CD4-positive, alpha-beta T cell (primary cell): ENCODE measurements at regions of chr6 and their contacts with region 1.

Region 1: GRCh38 chr6:142946181-142946923 is 1.4 kb upstream of the HIVEP2 start:
- DNase-seq: peak; percentile 75 to 99 (median 90)
- ATAC-seq: peak; percentile 46
- H3K4me3 ChIP-seq: peak overlapping the region; percentile 94
- H3K4me3 Mint-ChIP-seq: peak overlapping the region; percentile 96
- H3K27ac ChIP-seq: peak overlapping the region; percentile 98 to 100
- H3K27ac Mint-ChIP-seq: peak overlapping the region; percentile 98
- H3K4me1 ChIP-seq: peaks cover 14% of the 10 kb centered on the region
- H3K4me1 Mint-ChIP-seq: peaks cover 42% of the 10 kb centered on the region
- H3K27me3 ChIP-seq: no peaks in the 10 kb centered on the region
- H3K27me3 Mint-ChIP-seq: peaks cover 5% of the 10 kb centered on the region
- CTCF ChIP-seq: no peak

Region 2: GRCh38 chr6:142395768-142396231 is 550.6 kb before region 1 on chr6:
- CTCF ChIA-PET with region 1: no interaction called
- POLR2A ChIA-PET with region 1: no interaction called
- intact Hi-C with region 1: loop called in 1 of 2 experiments (anchors 5 kb)
- DNase-seq: peak in 3 of 14 experiments; percentile 78 to 87 (median 85)
- ATAC-seq: peak; percentile 92
- H3K4me3 ChIP-seq: peak overlapping the region; percentile 7
- H3K4me3 Mint-ChIP-seq: peak overlapping the region; percentile 42
- H3K27ac ChIP-seq: peak overlapping the region in 1 of 2 donors; percentile 79
- H3K27ac Mint-ChIP-seq: peak overlapping the region; percentile 92
- H3K4me1 ChIP-seq: peaks cover 3% of the 10 kb centered on the region
- H3K4me1 Mint-ChIP-seq: peaks cover 50% of the 10 kb centered on the region
- H3K27me3 ChIP-seq: no peaks in the 10 kb centered on the region
- H3K27me3 Mint-ChIP-seq: no peaks in the 10 kb centered on the region
- CTCF ChIP-seq: no peak

Region 3: GRCh38 chr6:142692942-142693341 is 253.4 kb before region 1 on chr6:
- CTCF ChIA-PET with region 1: interaction called, 3 read pairs
- POLR2A ChIA-PET with region 1: interaction called, 3 read pairs
- intact Hi-C with region 1: loop called in 1 of 2 experiments (anchors 2 kb)
- DNase-seq: peak; percentile 43 to 82 (median 62)
- ATAC-seq: peak; percentile 89
- H3K4me3 ChIP-seq: no peak overlapping the region
- H3K4me3 Mint-ChIP-seq: no peak overlapping the region
- H3K27ac ChIP-seq: no peak overlapping the region
- H3K27ac Mint-ChIP-seq: no peak overlapping the region
- H3K4me1 ChIP-seq: peaks cover 8% of the 10 kb centered on the region
- H3K4me1 Mint-ChIP-seq: peaks cover 21% of the 10 kb centered on the region
- H3K27me3 ChIP-seq: no peaks in the 10 kb centered on the region
- H3K27me3 Mint-ChIP-seq: no peaks in the 10 kb centered on the region
- CTCF ChIP-seq: peak; percentile 96

Region 4: GRCh38 chr6:142819603-142820337 is 126.6 kb before region 1 on chr6:
- CTCF ChIA-PET with region 1: interaction called, 3 read pairs
- POLR2A ChIA-PET with region 1: interaction called, 16 read pairs
- intact Hi-C with region 1: no loop called
- DNase-seq: peak in 5 of 14 experiments; percentile 13 to 84 (median 75)
- ATAC-seq: peak; percentile 51
- H3K4me3 ChIP-seq: peak overlapping the region; percentile 45
- H3K4me3 Mint-ChIP-seq: peak overlapping the region; percentile 84
- H3K27ac ChIP-seq: peak overlapping the region; percentile 75 to 84
- H3K27ac Mint-ChIP-seq: peak overlapping the region; percentile 82
- H3K4me1 ChIP-seq: peaks cover 52% of the 10 kb centered on the region
- H3K4me1 Mint-ChIP-seq: peaks cover 82% of the 10 kb centered on the region
- H3K27me3 ChIP-seq: no peaks in the 10 kb centered on the region
- H3K27me3 Mint-ChIP-seq: no peaks in the 10 kb centered on the region
- CTCF ChIP-seq: no peak

Region 5: DNA sequence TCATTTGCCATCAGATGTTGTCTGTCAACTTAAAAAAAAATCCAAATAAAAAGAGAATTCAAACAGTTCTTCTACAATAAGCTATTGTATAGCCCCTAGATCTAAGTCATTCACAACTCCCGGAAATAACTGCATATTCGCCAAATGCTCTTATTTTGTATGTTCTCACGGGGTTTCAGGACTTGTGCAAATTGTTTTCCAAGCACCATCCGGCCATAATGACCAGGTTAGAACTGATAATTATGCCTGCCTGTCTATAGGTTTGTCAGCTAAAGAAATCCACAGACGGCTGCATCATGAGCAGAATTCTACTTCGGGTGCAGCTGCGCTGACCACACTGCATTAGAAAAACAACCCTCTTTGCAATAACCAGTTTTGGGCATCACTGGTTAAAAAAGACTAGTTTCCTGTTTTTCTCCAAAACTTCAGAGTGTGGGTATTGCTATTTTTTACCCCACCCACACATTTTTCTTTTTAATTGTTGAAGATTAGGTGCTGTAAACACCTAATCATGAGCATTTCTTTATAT is 89.1 kb before region 1 on chr6:
- CTCF ChIA-PET with region 1: interaction called, 7 read pairs
- POLR2A ChIA-PET with region 1: interaction called, 111 read pairs
- intact Hi-C with region 1: loop called in 1 of 2 experiments (anchors 1 kb)
- DNase-seq: peak in 11 of 14 experiments; percentile 25 to 65 (median 37)
- ATAC-seq: peak; percentile 40
- H3K4me3 ChIP-seq: peak overlapping the region; percentile 46
- H3K4me3 Mint-ChIP-seq: peak overlapping the region; percentile 82
- H3K27ac ChIP-seq: peak overlapping the region; percentile 88 to 99
- H3K27ac Mint-ChIP-seq: peak overlapping the region; percentile 94
- H3K4me1 ChIP-seq: peaks cover 69% of the 10 kb centered on the region
- H3K4me1 Mint-ChIP-seq: peaks cover 93% of the 10 kb centered on the region
- H3K27me3 ChIP-seq: no peaks in the 10 kb centered on the region
- H3K27me3 Mint-ChIP-seq: no peaks in the 10 kb centered on the region
- CTCF ChIP-seq: no peak

Region 6: DNA sequence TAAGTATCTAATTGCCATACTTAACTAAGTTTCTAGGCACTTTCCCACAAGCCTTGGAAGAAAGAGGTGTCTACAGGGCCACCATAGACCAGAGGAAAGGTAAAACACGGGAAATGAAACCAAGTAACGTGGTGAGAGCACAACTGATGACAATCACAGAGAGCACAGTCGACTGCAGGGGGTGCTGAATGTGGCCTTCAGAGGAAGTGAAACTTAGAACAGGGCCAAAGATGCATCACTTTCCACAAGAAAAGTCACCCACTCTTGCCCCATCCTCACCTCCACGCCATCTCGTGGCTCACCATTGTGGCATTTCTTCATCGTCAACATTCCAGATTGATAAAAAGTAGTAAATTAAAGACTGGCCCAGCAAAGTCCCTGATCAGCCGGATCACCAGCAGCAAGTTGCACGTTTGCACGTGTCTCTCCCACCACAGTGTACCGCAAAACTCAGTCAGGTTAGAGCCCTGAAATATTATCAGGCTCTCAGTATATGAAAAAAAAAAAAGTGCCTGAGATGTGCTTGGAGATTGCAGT is 32.8 kb before region 1 on chr6:
- CTCF ChIA-PET with region 1: interaction called, 5 read pairs
- POLR2A ChIA-PET with region 1: interaction called, 10 read pairs
- intact Hi-C with region 1: no loop called
- DNase-seq: peak; percentile 51 to 91 (median 64)
- ATAC-seq: peak; percentile 93
- H3K4me3 ChIP-seq: peak overlapping the region; percentile 41
- H3K4me3 Mint-ChIP-seq: peak overlapping the region; percentile 88
- H3K27ac ChIP-seq: peak overlapping the region; percentile 88 to 90
- H3K27ac Mint-ChIP-seq: peak overlapping the region; percentile 96
- H3K4me1 ChIP-seq: peaks cover 63% of the 10 kb centered on the region
- H3K4me1 Mint-ChIP-seq: peaks cover 89% of the 10 kb centered on the region
- H3K27me3 ChIP-seq: no peaks in the 10 kb centered on the region
- H3K27me3 Mint-ChIP-seq: no peaks in the 10 kb centered on the region
- CTCF ChIP-seq: peak; percentile 42

Region 7: DNA sequence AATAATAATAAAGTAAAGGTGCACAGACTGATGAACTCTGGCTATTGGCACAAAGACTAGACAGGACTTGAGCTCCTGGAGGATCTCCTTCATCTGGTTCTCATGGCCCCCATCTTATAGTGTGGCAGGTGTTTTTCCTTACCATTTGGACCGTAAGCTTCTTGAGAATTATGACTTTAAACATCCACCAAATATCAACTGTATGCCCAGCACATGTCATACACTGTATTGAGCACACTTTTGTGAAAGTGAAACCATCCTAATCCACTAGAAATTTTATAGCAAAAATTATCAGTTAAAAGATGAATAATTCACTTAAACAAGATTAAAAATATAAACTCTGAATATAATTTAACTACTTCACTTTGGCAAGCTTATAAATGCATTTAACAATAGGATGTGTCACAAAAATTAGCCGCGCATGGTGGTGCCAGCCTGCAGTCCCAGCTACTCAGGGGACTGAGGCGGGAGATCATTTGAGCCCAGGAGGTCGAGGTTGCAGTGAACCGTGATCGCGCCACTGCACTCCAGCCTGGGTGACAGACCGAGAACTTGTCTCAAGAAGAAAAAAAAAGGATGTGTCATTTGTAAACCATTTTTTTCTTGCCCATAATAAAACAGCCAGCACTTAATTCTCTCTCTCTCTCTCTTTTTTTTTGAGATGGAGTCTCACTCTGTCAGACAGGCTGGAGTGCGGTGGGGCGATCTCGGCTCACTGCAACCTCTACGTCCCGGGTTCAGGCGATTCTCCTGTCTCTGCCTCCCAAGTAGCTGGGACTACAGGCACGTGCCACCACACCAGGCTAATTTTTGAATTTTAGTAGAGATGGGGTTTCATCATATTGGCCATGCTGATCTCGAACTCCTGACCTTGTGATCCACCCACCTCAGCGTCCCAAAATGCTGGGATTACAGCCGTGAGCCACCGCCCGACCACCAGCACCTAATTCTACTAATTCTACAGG is 10.5 kb before region 1 on chr6:
- CTCF ChIA-PET with region 1: interaction called, 5 read pairs
- POLR2A ChIA-PET with region 1: interaction called, 382 read pairs
- intact Hi-C with region 1: no loop called
- DNase-seq: peak in 4 of 14 experiments; percentile 34 to 72 (median 59)
- ATAC-seq: peak; percentile 37
- H3K4me3 ChIP-seq: peak overlapping the region; percentile 43
- H3K4me3 Mint-ChIP-seq: peak overlapping the region; percentile 87
- H3K27ac ChIP-seq: peak overlapping the region in 1 of 2 donors; percentile 58
- H3K27ac Mint-ChIP-seq: peak overlapping the region; percentile 95
- H3K4me1 ChIP-seq: peaks cover 48% of the 10 kb centered on the region
- H3K4me1 Mint-ChIP-seq: peaks cover 89% of the 10 kb centered on the region
- H3K27me3 ChIP-seq: no peaks in the 10 kb centered on the region
- H3K27me3 Mint-ChIP-seq: no peaks in the 10 kb centered on the region
- CTCF ChIP-seq: no peak